Caco-2 (cell line): ENCODE measurements at regions of chr7 and their contacts with region 1.

Region 1: GRCh38 chr7:123367484-123368122 is 166.8 kb downstream of the IQUB start:
- DNase-seq: peak in 1 of 2 experiments; percentile 45
- H3K4me3 ChIP-seq: no peak overlapping the region
- H3K4me3 Mint-ChIP-seq: no peak overlapping the region
- H3K27ac Mint-ChIP-seq: no peak overlapping the region
- H3K4me1 ChIP-seq: no peaks in the 10 kb centered on the region
- H3K4me1 Mint-ChIP-seq: no peaks in the 10 kb centered on the region
- H3K27me3 ChIP-seq: no peaks in the 10 kb centered on the region
- H3K27me3 Mint-ChIP-seq: peaks cover 2% of the 10 kb centered on the region
- CTCF ChIP-seq: peak; percentile 67 to 74

Region 2: GRCh38 chr7:123070702-123071286 is 296.8 kb before region 1 on chr7:
- CTCF ChIA-PET with region 1: no interaction called
- POLR2A ChIA-PET with region 1: no interaction called
- intact Hi-C with region 1: loop called (anchors 1 kb)
- DNase-seq: peak in 1 of 2 experiments; percentile 40
- H3K4me3 ChIP-seq: no peak overlapping the region
- H3K4me3 Mint-ChIP-seq: no peak overlapping the region
- H3K27ac Mint-ChIP-seq: no peak overlapping the region
- H3K4me1 ChIP-seq: no peaks in the 10 kb centered on the region
- H3K4me1 Mint-ChIP-seq: no peaks in the 10 kb centered on the region
- H3K27me3 ChIP-seq: no peaks in the 10 kb centered on the region
- H3K27me3 Mint-ChIP-seq: no peaks in the 10 kb centered on the region
- CTCF ChIP-seq: peak; percentile 63 to 73

Region 3: DNA sequence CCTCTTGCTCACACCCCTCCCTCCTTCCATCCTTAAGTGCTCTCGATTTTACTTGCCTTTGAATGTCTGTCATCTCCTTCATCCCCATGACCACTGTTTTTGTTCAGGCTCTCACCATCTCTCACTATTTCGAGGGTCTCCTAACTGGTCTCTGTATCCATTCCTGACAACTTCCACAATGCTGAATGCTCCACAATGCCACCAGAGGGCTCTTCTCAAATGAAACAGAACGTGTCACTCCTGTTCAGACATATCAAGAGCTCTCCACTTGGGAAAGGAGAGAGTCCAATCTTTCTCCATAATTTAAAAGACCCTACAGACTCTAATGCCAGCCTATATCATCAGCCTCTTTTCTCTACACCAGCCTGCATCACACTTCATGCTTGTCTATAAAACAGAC is 158.8 kb before region 1 on chr7:
- CTCF ChIA-PET with region 1: interaction called, 27 read pairs
- POLR2A ChIA-PET with region 1: no interaction called
- intact Hi-C with region 1: loop called (anchors 2 kb)
- DNase-seq: peak in 1 of 2 experiments; percentile 4
- H3K4me3 ChIP-seq: no peak overlapping the region
- H3K4me3 Mint-ChIP-seq: no peak overlapping the region
- H3K27ac Mint-ChIP-seq: no peak overlapping the region
- H3K4me1 ChIP-seq: no peaks in the 10 kb centered on the region
- H3K4me1 Mint-ChIP-seq: peaks cover 10% of the 10 kb centered on the region
- H3K27me3 ChIP-seq: no peaks in the 10 kb centered on the region
- H3K27me3 Mint-ChIP-seq: peaks cover 6% of the 10 kb centered on the region
- CTCF ChIP-seq: peak; percentile 25 to 45

Region 4: DNA sequence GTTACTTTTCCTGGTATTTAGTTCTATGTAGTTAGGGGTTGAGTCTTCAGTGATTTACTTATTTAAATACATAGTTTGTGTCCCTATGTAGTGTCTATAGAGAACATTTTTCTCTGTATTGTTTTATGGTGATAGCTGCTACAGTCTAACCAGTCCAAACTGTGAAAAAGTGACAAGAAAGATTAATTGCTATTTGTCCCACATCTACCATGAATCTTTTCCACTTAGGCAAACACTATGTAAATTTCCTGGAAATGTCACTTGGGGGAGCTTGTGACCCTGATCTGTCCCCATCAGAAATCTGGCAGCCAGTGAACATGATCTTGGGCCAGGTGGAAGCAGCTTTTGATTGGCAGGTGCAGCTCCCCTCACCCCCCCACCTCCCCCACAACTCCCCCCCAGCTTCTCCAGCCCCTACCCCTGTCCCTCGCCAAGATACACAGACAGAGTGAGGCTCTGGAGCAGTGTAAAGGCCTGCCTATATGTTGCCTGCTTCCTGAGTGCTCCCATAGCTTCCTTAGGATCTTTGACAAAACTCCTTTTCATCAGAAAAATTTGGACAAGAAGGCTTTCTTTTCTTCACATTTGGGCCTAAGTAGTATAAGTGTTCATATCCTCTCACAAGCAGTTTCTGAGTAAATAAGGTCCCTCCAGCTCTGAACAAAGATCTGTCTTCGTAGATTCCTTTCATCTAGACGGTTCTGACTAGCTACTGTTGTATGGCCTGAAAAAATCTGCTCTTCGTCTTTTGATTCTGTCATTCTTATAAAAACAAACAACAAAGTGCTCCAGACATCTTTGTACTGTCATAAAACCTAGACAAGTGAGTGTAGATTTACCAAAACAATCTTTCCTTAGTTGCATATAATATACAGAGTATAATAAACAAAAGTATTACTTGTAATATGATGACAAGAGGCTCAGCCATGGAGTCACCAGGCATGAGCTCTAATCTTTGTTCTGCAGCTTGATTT is 136.3 kb before region 1 on chr7:
- CTCF ChIA-PET with region 1: interaction called, 3 read pairs
- POLR2A ChIA-PET with region 1: no interaction called
- intact Hi-C with region 1: loop called (anchors 1 kb)
- DNase-seq: no peak
- H3K4me3 ChIP-seq: no peak overlapping the region
- H3K4me3 Mint-ChIP-seq: no peak overlapping the region
- H3K27ac Mint-ChIP-seq: no peak overlapping the region
- H3K4me1 ChIP-seq: no peaks in the 10 kb centered on the region
- H3K4me1 Mint-ChIP-seq: no peaks in the 10 kb centered on the region
- H3K27me3 ChIP-seq: no peaks in the 10 kb centered on the region
- H3K27me3 Mint-ChIP-seq: peaks cover 2% of the 10 kb centered on the region
- CTCF ChIP-seq: no peak

Region 5: GRCh38 chr7:123271231-123271630 is 96.4 kb before region 1 on chr7:
- CTCF ChIA-PET with region 1: no interaction called
- POLR2A ChIA-PET with region 1: no interaction called
- intact Hi-C with region 1: no loop called
- DNase-seq: no peak
- H3K4me3 ChIP-seq: no peak overlapping the region
- H3K4me3 Mint-ChIP-seq: no peak overlapping the region
- H3K27ac Mint-ChIP-seq: no peak overlapping the region
- H3K4me1 ChIP-seq: no peaks in the 10 kb centered on the region
- H3K4me1 Mint-ChIP-seq: no peaks in the 10 kb centered on the region
- H3K27me3 ChIP-seq: no peaks in the 10 kb centered on the region
- H3K27me3 Mint-ChIP-seq: no peaks in the 10 kb centered on the region
- CTCF ChIP-seq: no peak